ENCODE measurements at regions of chr7 and their contacts with region 1.

Region 1: DNA sequence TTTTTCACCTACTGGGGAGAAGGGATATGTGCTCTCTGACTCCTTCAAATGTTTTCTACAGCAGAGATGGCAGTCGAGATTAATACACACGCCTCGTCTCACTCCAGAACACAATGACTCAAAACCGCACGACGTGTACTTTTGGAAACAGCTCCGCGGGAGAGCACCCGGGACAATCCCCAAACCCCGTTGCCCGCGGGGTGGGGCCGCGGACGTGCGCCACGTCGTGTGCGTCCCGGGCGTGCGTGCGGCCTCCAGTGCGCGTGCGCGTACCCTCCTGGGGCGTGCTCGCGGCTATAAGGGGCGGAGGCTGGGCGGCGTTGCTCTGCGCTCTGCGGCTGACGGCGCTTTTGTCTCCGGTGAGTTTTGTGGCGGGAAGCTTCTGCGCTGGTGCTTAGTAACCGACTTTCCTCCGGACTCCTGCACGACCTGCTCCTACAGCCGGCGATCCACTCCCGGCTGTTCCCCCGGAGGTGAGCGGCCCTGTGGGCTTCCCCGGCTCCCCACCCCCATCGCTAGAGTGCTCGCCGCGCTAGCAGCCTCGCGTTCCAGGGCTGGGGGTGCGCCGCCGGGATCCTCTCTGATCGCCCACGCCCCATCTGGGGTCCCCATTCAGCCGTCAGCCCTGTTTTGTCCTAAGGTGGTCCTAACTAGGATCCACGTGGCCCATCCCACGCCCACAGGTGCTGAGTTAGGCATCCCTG is at the start of gene HILPDA:
- DNase-seq: peak; percentile 90 to 98 (median 94)
- H3K4me3 ChIP-seq: peak within 1 kb of the TSS; percentile 69 to 91 (median 85)
- H3K4me3 Mint-ChIP-seq: peak within 1 kb of the TSS; percentile 89 to 95
- H3K27ac ChIP-seq: peak within 1 kb of the TSS; percentile 86 to 95
- H3K27ac Mint-ChIP-seq: peak within 1 kb of the TSS; percentile 95 to 99 (median 98)
- H3K4me1 ChIP-seq: peaks cover 20 to 32% of the 10 kb centered on the region in 2 donors
- H3K4me1 Mint-ChIP-seq: peaks cover 34% of the 10 kb centered on the region
- H3K27me3 ChIP-seq: no peaks in the 10 kb centered on the region
- H3K27me3 Mint-ChIP-seq: peaks cover 0 to 1% (median 0%) of the 10 kb centered on the region in 3 donors
- CTCF ChIP-seq: no peak
- polyA plus RNA-seq, gene HILPDA: 2.0 to 7.9 (median 2.6) TPM

Region 2: GRCh38 chr7:127629268-127629854 is 826.3 kb before region 1 on chr7:
- intact Hi-C with region 1: no loop called
- DNase-seq: peak in 2 of 3 donors; percentile 9
- H3K4me3 ChIP-seq: no peak overlapping the region
- H3K4me3 Mint-ChIP-seq: no peak overlapping the region
- H3K27ac ChIP-seq: no peak overlapping the region
- H3K27ac Mint-ChIP-seq: peak overlapping the region in 1 of 7 donors; percentile 8
- H3K4me1 ChIP-seq: peaks cover 0 to under 1% of the 10 kb centered on the region in 2 donors
- H3K4me1 Mint-ChIP-seq: peaks cover 6% of the 10 kb centered on the region
- H3K27me3 ChIP-seq: no peaks in the 10 kb centered on the region
- H3K27me3 Mint-ChIP-seq: peaks cover 0 to 2% (median 2%) of the 10 kb centered on the region in 3 donors
- CTCF ChIP-seq: peak; percentile 34

Region 3: DNA sequence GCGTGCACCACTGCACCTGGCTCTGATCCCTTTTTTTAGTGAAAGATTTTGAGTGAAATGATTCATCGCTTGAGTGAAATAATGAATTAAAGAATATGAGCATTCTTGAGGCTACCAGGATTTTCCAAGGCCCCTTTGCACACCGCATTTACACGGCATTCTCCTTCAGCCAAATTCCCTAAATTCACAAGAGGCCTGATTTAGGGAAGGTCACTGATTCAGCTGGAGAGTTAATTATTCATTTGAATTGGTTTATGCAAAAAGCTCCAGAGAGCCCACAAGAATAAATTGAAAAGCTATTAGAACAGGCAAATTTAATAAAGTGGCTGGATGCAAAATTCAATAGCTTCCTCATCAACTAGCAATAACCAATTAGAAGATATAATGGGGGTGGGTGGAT is 168.1 kb before region 1 on chr7:
- intact Hi-C with region 1: no loop called
- DNase-seq: no peak
- H3K4me3 ChIP-seq: no peak overlapping the region
- H3K4me3 Mint-ChIP-seq: no peak overlapping the region
- H3K27ac ChIP-seq: no peak overlapping the region
- H3K27ac Mint-ChIP-seq: no peak overlapping the region
- H3K4me1 ChIP-seq: no peaks in the 10 kb centered on the region
- H3K4me1 Mint-ChIP-seq: no peaks in the 10 kb centered on the region
- H3K27me3 ChIP-seq: no peaks in the 10 kb centered on the region
- H3K27me3 Mint-ChIP-seq: no peaks in the 10 kb centered on the region
- CTCF ChIP-seq: no peak

Region 4: DNA sequence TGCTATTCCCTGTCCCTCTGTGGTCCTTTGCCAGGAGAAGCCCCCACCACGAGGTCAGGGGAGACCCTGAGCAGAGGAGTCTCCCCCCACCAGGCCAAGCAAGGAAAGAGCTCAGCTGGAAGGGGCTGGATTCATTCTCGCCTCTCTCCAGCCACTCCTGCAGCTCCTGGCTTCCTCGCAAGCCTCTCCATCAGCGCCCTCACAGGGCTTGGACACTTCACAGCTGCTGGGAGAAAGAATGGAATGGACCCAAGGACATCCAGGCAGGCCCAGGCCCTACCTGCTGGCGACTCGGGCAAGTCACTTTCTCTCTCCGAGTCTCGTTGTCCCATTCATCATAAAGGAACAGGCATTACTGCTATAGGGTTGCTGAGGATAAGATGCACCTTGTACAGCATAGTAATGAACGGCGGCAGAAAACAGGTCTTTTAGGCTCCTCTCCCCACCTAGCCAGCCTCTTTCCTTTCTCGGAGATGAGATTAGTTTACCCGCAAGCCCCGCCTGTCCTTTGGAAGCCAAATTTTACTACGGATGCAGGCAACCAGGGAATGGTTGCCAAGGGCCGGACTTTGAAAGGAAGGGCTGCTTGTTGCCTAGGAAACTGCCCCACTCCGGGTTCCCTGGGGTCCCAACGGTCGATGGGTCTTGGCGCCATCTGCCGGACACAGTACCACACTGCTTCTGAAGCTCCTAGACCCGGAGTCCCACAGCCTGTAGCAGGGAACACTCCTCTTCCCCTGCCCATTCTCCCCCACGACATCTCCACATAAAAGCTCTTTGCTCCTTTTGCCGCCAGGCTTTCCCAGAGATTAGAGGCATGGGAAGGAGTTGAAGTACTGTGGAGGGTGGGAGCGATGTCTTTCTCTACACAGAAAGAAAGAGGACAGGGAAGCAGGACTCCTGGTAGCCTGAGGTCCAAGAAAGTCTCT is 68.2 kb before region 1 on chr7:
- intact Hi-C with region 1: no loop called
- DNase-seq: peak; percentile 51 to 65 (median 62)
- H3K4me3 ChIP-seq: no peak overlapping the region
- H3K4me3 Mint-ChIP-seq: peak overlapping the region in 1 of 2 donors; percentile 63
- H3K27ac ChIP-seq: no peak overlapping the region
- H3K27ac Mint-ChIP-seq: no peak overlapping the region
- H3K4me1 ChIP-seq: peaks cover 11 to 12% of the 10 kb centered on the region in 2 donors
- H3K4me1 Mint-ChIP-seq: peaks cover 23% of the 10 kb centered on the region
- H3K27me3 ChIP-seq: no peaks in the 10 kb centered on the region
- H3K27me3 Mint-ChIP-seq: peaks cover 7 to 15% (median 11%) of the 10 kb centered on the region in 3 donors
- CTCF ChIP-seq: peak; percentile 95

Region 5: DNA sequence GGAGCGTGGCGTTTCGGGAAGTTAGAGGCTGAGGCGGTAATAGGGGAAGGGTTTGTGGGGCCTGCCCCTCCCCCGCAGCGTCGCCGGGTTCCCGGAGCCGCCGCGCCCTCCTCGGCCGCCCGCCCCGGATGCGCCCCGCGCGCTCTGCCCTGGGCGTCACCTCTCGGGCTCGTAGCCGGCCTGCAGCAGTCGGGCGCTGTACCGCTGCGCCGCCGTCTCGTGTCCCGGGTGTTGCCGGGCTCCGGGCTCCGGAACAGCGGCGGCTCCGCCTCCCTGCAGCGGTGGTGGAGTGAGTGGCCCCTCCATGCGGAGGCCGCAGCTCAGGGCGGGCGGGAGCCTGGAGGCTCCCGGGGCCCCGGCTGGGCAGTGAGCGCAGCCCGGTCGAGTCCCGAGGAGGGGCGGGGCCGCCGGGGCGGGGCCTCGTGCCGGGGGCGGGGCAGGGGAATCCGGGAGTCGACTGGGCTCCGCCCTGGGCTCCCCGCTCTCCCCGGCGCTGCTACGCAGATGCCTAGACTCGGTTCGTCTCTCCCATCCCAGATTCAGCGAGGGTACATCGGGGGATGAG is 46.0 kb before region 1 on chr7 and contains the start of gene IMPDH1:
- intact Hi-C with region 1: loop called (anchors 10 kb)
- DNase-seq: peak; percentile 73 to 76 (median 74)
- H3K4me3 ChIP-seq: peak within 1 kb of the TSS; percentile 80 to 93 (median 89)
- H3K4me3 Mint-ChIP-seq: peak within 1 kb of the TSS; percentile 94 to 99
- H3K27ac ChIP-seq: peak within 1 kb of the TSS; percentile 87 to 94
- H3K27ac Mint-ChIP-seq: peak within 1 kb of the TSS; percentile 95 to 99 (median 97)
- H3K4me1 ChIP-seq: peaks cover 46 to 47% of the 10 kb centered on the region in 2 donors
- H3K4me1 Mint-ChIP-seq: peaks cover 46% of the 10 kb centered on the region
- H3K27me3 ChIP-seq: no peaks in the 10 kb centered on the region
- H3K27me3 Mint-ChIP-seq: peaks cover 0 to 5% (median 4%) of the 10 kb centered on the region in 3 donors
- CTCF ChIP-seq: no peak
- polyA plus RNA-seq, gene IMPDH1: 110 to 259 (median 152) TPM

Region 6: GRCh38 chr7:128425850-128426249 is 29.9 kb before region 1 on chr7:
- intact Hi-C with region 1: loop called in 1 of 2 experiments (anchors 1 kb)
- DNase-seq: peak; percentile 63 to 75 (median 73)
- H3K4me3 ChIP-seq: no peak overlapping the region
- H3K4me3 Mint-ChIP-seq: no peak overlapping the region
- H3K27ac ChIP-seq: no peak overlapping the region
- H3K27ac Mint-ChIP-seq: no peak overlapping the region
- H3K4me1 ChIP-seq: peaks cover 34 to 47% of the 10 kb centered on the region in 2 donors
- H3K4me1 Mint-ChIP-seq: peaks cover 24% of the 10 kb centered on the region
- H3K27me3 ChIP-seq: no peaks in the 10 kb centered on the region
- H3K27me3 Mint-ChIP-seq: no peaks in the 10 kb centered on the region
- CTCF ChIP-seq: peak; percentile 97

Region 7: DNA sequence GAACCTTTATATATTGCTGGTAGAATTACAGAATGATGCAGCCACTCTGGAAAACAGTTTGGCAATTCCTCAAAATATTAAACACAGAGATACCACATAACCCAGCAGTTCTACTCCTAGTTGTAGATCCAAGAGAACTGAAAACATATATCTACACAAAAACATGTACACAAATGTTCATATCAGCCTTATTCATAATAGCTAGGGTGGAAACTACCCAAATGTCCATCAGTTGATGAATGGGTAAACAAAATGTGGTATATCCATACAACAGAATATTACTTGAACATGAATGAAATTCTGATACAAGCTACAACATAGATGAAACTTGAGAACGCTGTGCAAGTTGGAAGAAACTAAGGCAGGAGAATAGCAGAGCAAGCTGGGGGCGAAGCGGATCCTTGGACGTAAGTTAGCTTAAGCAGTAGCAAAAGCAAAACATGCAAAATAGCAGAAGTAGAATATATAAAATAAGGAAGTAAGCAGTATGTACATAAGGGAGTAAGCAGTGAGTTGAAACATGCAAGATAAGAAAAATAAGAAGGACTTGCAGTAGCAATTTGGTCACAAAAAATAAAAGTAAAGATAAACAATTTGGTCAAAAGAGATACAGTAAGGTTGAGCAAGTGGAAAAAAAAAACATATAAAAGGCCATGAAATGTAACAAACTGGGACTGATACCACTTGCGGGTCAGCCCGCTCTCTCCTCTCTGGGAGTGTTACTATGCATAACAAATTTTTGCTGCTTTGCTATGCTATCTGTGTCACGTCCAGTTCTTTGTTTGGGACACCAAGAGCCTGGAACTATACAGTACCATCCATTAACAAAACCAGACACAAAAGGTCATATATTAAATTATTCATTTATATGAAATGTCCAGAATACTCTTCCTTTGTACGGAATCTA is 18.0 kb before region 1 on chr7:
- intact Hi-C with region 1: no loop called
- DNase-seq: peak; percentile 44 to 65 (median 59)
- H3K4me3 ChIP-seq: peak overlapping the region in 2 of 3 experiments; percentile 30 to 61
- H3K4me3 Mint-ChIP-seq: peak overlapping the region in 1 of 2 donors; percentile 82
- H3K27ac ChIP-seq: peak overlapping the region; percentile 78 to 85
- H3K27ac Mint-ChIP-seq: peak overlapping the region; percentile 65 to 91 (median 84)
- H3K4me1 ChIP-seq: peaks cover 26 to 27% of the 10 kb centered on the region in 2 donors
- H3K4me1 Mint-ChIP-seq: peaks cover 29% of the 10 kb centered on the region
- H3K27me3 ChIP-seq: no peaks in the 10 kb centered on the region
- H3K27me3 Mint-ChIP-seq: peaks cover 0 to 1% (median 0%) of the 10 kb centered on the region in 3 donors
- CTCF ChIP-seq: no peak

Measured in CD14-positive monocyte (primary cell).